Activated T-helper 2 cell treated with anti-CD3 and anti-CD28 coated beads, Interferon-gamma antibody, Interleukin-2, Interleukin-4, amounts not matched to agents 10 μg/mL and 5 μg/mL and 100 μg/mL, durations not matched to agents 14 hours and 24 hours and 36 hours (primary cell): ENCODE measurements at regions of chr20 and their contacts with region 1.

Region 1: DNA sequence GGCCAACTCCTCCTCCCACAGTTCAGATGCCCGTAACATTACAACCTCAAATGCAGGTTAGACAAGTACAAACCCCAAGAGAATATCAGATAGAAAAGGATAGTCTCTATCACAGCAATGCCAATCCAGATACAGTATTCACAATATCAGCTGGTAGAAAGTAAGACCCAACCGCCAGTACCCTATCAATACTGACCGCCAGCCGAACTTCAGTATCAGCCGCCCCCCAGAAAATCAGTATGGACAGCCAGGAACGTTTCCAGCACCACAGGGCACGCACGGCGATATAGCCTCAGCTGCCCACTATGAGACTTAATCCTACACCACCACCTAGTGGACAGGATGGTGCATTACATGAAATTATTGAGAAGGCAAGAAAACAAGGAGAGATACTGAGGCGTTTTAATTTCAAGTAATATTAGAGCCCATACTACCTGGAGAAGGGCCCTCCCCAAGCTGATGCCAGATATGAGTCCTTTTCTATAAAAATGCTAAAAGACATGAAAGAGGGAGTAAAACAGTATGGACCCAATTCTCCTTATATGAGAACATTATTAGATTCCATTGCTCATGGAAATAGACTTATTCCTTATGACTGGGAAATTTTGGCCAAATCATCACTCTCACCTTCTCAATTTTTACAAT is 17.6 kb upstream of the EIF2S2 start:
- DNase-seq: peak; percentile 49
- H3K4me3 Mint-ChIP-seq: no peak overlapping the region
- H3K27ac Mint-ChIP-seq: no peak overlapping the region
- H3K4me1 Mint-ChIP-seq: peaks cover 9% of the 10 kb centered on the region
- H3K27me3 Mint-ChIP-seq: peaks cover 14% of the 10 kb centered on the region

Region 2: GRCh38 chr20:33915726-33916331 is 213.8 kb before region 1 on chr20:
- intact Hi-C with region 1: loop called (anchors 2 kb)
- DNase-seq: peak; percentile 12
- H3K4me3 Mint-ChIP-seq: no peak overlapping the region
- H3K27ac Mint-ChIP-seq: no peak overlapping the region
- H3K4me1 Mint-ChIP-seq: no peaks in the 10 kb centered on the region
- H3K27me3 Mint-ChIP-seq: peaks cover 15% of the 10 kb centered on the region

Region 3: DNA sequence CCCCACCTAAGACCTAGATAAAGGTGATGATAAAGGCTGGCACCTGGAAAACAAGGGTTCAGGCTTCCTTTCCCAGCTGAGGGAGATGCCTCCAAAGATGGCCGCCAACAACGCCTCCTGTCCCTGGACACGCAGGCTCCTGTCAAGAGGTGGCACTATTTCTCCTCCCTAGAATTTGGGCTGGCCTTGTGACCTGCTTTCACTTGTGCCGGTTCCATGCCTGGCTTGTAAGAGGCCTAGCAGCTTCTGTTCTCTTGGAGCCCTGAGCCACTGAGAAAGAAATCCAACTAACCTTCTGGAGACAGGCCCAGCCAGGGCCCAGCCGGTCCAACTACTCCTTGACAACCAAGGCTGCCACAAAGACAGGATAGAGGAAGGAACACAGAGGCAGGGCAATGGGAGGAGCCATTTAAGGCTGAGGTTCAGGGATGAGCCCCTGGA is 196.2 kb before region 1 on chr20:
- intact Hi-C with region 1: loop called (anchors 1 kb)
- DNase-seq: peak; percentile 42
- H3K4me3 Mint-ChIP-seq: no peak overlapping the region
- H3K27ac Mint-ChIP-seq: no peak overlapping the region
- H3K4me1 Mint-ChIP-seq: peaks cover 2% of the 10 kb centered on the region
- H3K27me3 Mint-ChIP-seq: peaks cover 2% of the 10 kb centered on the region

Region 4: GRCh38 chr20:34365765-34366251 is 236.2 kb after region 1 on chr20:
- intact Hi-C with region 1: no loop called
- DNase-seq: peak; percentile 13
- H3K4me3 Mint-ChIP-seq: peak overlapping the region; percentile 62
- H3K27ac Mint-ChIP-seq: peak overlapping the region; percentile 56
- H3K4me1 Mint-ChIP-seq: peaks cover 43% of the 10 kb centered on the region
- H3K27me3 Mint-ChIP-seq: no peaks in the 10 kb centered on the region